Activated CD4-positive, alpha-beta T cell treated with anti-CD3 and anti-CD28 coated beads for 36 hours (primary cell): ENCODE measurements at regions of chr2 and their contacts with region 1.

Region 1: DNA sequence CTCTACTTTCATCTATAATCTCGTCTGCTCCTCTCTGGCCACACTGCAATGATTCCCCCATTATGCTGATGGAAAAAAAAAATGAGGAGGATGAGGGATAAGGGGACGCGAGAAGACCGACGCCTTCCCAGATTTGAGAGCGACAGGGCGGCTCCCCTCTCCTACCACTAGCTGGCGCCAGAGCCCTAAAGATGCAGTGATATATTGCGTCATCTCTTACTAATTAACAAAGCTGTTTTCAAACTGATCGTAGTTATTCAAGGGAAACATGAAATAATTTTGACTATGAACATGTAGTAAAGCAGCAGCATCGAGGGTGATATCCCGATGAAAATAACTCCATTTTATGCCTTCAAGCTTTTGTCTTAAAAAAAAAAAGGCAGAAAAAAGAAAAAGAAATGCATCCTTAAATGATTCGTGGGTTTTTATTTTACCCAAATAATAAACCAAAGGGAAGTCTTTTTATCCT is 48.0 kb upstream of the HNRNPA3 start:
- DNase-seq: peak; percentile 89
- ATAC-seq: peak; percentile 68
- H3K4me3 Mint-ChIP-seq: no peak overlapping the region
- H3K27ac Mint-ChIP-seq: no peak overlapping the region
- H3K4me1 Mint-ChIP-seq: peaks cover 24% of the 10 kb centered on the region
- H3K27me3 Mint-ChIP-seq: no peaks in the 10 kb centered on the region

Region 2: GRCh38 chr2:177148477-177149154 is 16.0 kb before region 1 on chr2:
- CTCF ChIA-PET with region 1: interaction called, 43 read pairs
- POLR2A ChIA-PET with region 1: no interaction called
- intact Hi-C with region 1: no loop called
- DNase-seq: peak; percentile 87
- ATAC-seq: peak; percentile 96
- H3K4me3 Mint-ChIP-seq: peak overlapping the region; percentile 81
- H3K27ac Mint-ChIP-seq: peak overlapping the region; percentile 28
- H3K4me1 Mint-ChIP-seq: peaks cover 14% of the 10 kb centered on the region
- H3K27me3 Mint-ChIP-seq: peaks cover 32% of the 10 kb centered on the region

Region 3: DNA sequence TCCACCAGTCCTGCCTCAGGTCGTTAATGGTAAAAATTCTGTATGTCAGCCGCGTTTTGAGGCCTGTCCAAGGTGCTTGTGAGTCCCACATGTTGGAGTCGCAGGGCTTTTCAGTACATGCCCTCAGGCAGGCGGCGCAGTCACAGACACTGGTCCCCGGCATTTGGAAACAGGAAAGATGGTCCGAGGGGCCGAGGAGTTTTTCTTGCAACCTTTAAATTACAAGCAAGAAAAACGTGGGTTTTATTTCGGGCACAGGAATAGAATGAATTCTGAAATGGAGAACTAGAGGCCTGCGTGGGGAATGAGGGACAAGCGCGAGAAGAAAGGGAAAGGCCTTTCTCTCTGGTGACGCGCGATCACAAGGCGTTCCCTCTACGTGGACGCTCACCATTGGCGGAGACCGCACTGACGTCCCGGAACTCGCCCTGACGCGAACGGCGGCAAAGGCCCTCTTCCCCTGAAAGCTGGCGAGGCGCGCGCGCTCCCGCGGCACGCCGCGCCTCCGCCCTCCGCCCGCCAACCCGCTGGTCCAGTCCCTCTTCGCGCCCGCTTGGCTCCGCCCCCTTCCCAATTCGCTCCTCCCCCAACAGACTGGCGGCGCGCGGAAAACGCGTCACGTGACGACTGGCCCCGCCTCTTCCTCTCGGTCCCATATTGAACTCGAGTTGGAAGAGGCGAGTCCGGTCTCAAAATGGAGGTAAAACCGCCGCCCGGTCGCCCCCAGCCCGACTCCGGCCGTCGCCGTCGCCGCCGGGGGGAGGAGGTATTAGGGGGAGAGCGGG is 47.7 kb after region 1 on chr2 and contains the start of gene HNRNPA3:
- CTCF ChIA-PET with region 1: interaction called, 18 read pairs
- POLR2A ChIA-PET with region 1: interaction called, 13 read pairs
- intact Hi-C with region 1: loop called (anchors 1 kb)
- DNase-seq: peak; percentile 100
- ATAC-seq: peak; percentile 90
- H3K4me3 Mint-ChIP-seq: peak within 1 kb of the TSS; percentile 86
- H3K27ac Mint-ChIP-seq: peak within 1 kb of the TSS; percentile 99
- H3K4me1 Mint-ChIP-seq: peaks cover 42% of the 10 kb centered on the region
- H3K27me3 Mint-ChIP-seq: no peaks in the 10 kb centered on the region
- total RNA-seq, gene HNRNPA3: 200 to 290 TPM

Region 4: DNA sequence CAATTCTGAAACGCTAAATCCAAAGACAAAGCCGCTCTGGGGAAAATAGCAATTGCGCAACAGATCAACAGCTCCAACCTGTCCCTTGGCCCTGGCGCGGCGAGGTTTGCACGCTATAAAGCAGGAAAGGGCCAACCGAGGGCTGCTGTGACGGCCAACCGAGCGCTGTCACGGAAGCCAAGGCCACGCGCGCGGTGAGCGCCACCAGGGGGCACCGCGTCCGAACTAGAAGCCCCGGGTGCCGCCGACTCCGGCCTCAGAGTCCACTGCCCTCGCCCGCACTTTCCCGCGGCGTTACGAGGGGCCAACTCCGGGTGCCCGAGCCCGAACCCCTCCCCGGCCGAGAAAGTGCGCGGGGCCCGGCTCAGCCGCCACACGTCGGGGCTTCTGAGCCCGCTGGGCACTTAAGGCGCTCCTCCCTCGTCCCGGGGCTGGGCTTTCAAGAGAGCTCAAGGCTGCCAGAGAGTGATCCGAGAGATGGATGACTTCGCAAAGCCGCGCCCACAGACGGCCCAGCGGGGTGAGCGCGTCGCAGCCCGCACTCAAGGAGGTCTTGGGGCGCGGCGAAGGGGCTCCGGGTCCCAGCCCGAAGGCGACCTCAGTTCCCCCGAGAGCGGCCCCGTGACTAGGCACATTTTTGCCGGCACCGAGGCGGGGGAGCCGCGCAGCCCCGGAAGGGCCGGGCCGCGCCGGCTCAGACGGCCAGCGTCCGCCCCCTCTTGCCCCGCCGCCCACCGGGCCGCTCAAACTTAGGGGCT is 99.0 kb after region 1 on chr2:
- CTCF ChIA-PET with region 1: interaction called, 47 read pairs
- POLR2A ChIA-PET with region 1: interaction called, 24 read pairs
- intact Hi-C with region 1: loop called (anchors 1 to 2 kb)
- DNase-seq: peak; percentile 96
- ATAC-seq: peak; percentile 69
- H3K4me3 Mint-ChIP-seq: peak overlapping the region; percentile 91
- H3K27ac Mint-ChIP-seq: peak overlapping the region; percentile 98
- H3K4me1 Mint-ChIP-seq: peaks cover 53% of the 10 kb centered on the region
- H3K27me3 Mint-ChIP-seq: no peaks in the 10 kb centered on the region

Region 5: GRCh38 chr2:177296040-177296439 is 131.4 kb after region 1 on chr2:
- CTCF ChIA-PET with region 1: interaction called, 52 read pairs
- POLR2A ChIA-PET with region 1: no interaction called
- intact Hi-C with region 1: loop called (anchors 1 kb)
- DNase-seq: no peak
- ATAC-seq: peak; percentile 24
- H3K4me3 Mint-ChIP-seq: no peak overlapping the region
- H3K27ac Mint-ChIP-seq: no peak overlapping the region
- H3K4me1 Mint-ChIP-seq: peaks cover 23% of the 10 kb centered on the region
- H3K27me3 Mint-ChIP-seq: no peaks in the 10 kb centered on the region

Region 6: DNA sequence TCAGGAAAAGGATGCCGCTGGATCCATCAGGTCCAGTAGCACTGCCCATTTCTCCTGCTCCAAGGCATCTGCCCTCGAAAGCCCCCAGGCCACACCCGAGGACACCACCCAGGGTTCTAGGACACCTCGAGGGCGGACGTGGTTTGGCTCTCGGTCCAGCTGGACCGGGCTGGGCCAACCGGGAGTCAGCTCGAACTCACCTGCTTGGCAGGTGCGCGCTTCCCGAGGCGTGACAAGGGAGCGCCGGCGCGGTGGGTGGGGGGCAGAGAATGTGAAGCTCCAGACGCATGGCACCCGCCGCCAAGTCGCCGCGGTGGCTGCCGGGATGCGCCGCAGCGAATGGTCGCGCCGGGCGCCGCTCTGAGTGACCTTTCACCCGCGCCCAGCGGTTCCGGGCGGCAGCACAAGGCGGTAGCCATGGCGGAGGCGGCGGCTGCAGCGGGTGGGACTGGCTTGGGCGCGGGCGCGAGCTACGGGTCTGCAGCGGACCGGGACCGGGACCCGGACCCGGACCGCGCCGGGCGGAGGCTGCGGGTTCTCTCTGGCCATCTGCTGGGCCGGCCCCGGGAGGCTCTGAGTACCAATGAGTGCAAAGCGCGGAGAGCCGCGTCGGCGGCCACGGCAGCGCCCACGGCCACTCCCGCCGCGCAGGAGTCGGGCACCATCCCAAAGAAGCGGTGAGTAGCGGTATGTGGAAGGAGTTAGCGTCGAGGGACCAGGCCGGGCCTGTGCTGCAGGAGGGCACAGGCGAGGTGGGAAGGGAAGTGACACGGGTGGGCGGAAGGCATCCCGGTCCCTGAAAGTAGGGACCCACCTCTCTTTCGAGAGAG is 228.0 kb after region 1 on chr2 and contains the start of gene AGPS:
- CTCF ChIA-PET with region 1: interaction called, 18 read pairs
- POLR2A ChIA-PET with region 1: no interaction called
- intact Hi-C with region 1: no loop called
- DNase-seq: peak; percentile 91
- ATAC-seq: peak; percentile 97
- H3K4me3 Mint-ChIP-seq: peak within 1 kb of the TSS; percentile 89
- H3K27ac Mint-ChIP-seq: peak within 1 kb of the TSS; percentile 92
- H3K4me1 Mint-ChIP-seq: peaks cover 57% of the 10 kb centered on the region
- H3K27me3 Mint-ChIP-seq: no peaks in the 10 kb centered on the region
- total RNA-seq, gene AGPS: 58.7 to 67.3 TPM

Region 7: GRCh38 chr2:177724398-177725287 is 560.0 kb after region 1 on chr2:
- CTCF ChIA-PET with region 1: interaction called, 28 read pairs
- POLR2A ChIA-PET with region 1: no interaction called
- intact Hi-C with region 1: loop called (anchors 1 to 2 kb)
- DNase-seq: peak; percentile 72
- ATAC-seq: peak; percentile 64
- H3K4me3 Mint-ChIP-seq: no peak overlapping the region
- H3K27ac Mint-ChIP-seq: no peak overlapping the region
- H3K4me1 Mint-ChIP-seq: peaks cover 2% of the 10 kb centered on the region
- H3K27me3 Mint-ChIP-seq: peaks cover 16% of the 10 kb centered on the region